ENCODE measurements at regions of chr9 and their contacts with region 1.

Region 1: GRCh38 chr9:112819635-112820496 is 69.3 kb downstream of the SNX30 start:
- DNase-seq: peak; percentile 71
- H3K4me3 ChIP-seq: no peak overlapping the region
- H3K27ac ChIP-seq: no peak overlapping the region
- H3K4me1 ChIP-seq: no peaks in the 10 kb centered on the region
- H3K27me3 ChIP-seq: no peaks in the 10 kb centered on the region
- CTCF ChIP-seq: peak; percentile 72

Region 2: DNA sequence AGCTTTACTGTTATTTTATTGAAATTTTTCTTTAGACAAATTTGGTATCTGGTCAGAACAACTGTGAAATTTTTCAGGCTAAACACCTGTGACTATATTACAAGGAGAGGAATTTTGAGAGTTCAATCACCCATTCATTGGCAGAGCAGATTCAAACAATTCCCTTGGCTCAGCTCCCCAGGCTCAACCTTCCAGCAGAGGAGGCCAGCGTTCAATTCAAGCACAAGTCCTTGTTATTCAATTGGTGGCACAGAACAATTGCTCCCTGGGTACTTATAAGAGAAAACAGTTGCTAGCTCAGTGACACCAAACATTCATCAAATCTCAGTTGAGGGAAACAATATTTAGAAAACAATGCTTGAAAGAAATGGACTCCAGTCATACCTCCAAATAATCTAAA is 728.1 kb before region 1 on chr9:
- CTCF ChIA-PET with region 1: no interaction called
- POLR2A ChIA-PET with region 1: no interaction called
- intact Hi-C with region 1: loop called (anchors 5 kb)
- DNase-seq: peak; percentile 52
- H3K4me3 ChIP-seq: no peak overlapping the region
- H3K27ac ChIP-seq: no peak overlapping the region
- H3K4me1 ChIP-seq: peaks cover 4% of the 10 kb centered on the region
- H3K27me3 ChIP-seq: no peaks in the 10 kb centered on the region
- CTCF ChIP-seq: peak; percentile 57

Region 3: DNA sequence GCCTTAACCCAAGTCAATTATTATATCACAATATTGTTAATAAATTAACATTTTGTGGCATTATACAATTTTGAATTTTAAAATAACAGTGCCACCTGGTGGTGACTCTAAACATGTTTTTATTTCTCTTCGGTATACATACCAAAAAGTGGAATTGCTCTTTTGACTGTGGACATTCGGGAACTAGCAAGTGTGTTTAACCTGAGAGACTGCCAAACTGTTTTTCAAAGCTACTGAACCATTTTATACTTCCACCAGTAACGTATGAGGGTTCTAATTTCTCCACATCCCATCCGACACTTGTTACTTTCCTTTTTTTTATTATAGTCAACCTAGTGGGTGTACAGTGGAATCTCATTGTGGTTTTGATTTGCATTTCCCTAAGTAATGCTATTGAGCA is 458.3 kb before region 1 on chr9:
- CTCF ChIA-PET with region 1: no interaction called
- POLR2A ChIA-PET with region 1: no interaction called
- intact Hi-C with region 1: loop called (anchors 10 kb)
- DNase-seq: peak; percentile 70
- H3K4me3 ChIP-seq: no peak overlapping the region
- H3K27ac ChIP-seq: no peak overlapping the region
- H3K4me1 ChIP-seq: no peaks in the 10 kb centered on the region
- H3K27me3 ChIP-seq: no peaks in the 10 kb centered on the region
- CTCF ChIP-seq: peak; percentile 65

Region 4: GRCh38 chr9:112764344-112764743 is 55.5 kb before region 1 on chr9:
- CTCF ChIA-PET with region 1: no interaction called
- POLR2A ChIA-PET with region 1: no interaction called
- intact Hi-C with region 1: loop called (anchors 10 kb)
- DNase-seq: no peak
- H3K4me3 ChIP-seq: no peak overlapping the region
- H3K27ac ChIP-seq: no peak overlapping the region
- H3K4me1 ChIP-seq: no peaks in the 10 kb centered on the region
- H3K27me3 ChIP-seq: no peaks in the 10 kb centered on the region
- CTCF ChIP-seq: no peak